ENCODE measurements at regions of chr14 and their contacts with region 1.

Region 1: GRCh38 chr14:74867673-74868072 is 8.3 kb downstream of the PROX2 start:
- DNase-seq: peak; percentile 87
- ATAC-seq: peak; percentile 97
- H3K4me3 Mint-ChIP-seq: peak overlapping the region; percentile 28
- H3K27ac Mint-ChIP-seq: peak overlapping the region; percentile 78
- H3K4me1 Mint-ChIP-seq: peaks cover 21% of the 10 kb centered on the region
- H3K27me3 Mint-ChIP-seq: no peaks in the 10 kb centered on the region
- CTCF ChIP-seq: no peak

Region 2: DNA sequence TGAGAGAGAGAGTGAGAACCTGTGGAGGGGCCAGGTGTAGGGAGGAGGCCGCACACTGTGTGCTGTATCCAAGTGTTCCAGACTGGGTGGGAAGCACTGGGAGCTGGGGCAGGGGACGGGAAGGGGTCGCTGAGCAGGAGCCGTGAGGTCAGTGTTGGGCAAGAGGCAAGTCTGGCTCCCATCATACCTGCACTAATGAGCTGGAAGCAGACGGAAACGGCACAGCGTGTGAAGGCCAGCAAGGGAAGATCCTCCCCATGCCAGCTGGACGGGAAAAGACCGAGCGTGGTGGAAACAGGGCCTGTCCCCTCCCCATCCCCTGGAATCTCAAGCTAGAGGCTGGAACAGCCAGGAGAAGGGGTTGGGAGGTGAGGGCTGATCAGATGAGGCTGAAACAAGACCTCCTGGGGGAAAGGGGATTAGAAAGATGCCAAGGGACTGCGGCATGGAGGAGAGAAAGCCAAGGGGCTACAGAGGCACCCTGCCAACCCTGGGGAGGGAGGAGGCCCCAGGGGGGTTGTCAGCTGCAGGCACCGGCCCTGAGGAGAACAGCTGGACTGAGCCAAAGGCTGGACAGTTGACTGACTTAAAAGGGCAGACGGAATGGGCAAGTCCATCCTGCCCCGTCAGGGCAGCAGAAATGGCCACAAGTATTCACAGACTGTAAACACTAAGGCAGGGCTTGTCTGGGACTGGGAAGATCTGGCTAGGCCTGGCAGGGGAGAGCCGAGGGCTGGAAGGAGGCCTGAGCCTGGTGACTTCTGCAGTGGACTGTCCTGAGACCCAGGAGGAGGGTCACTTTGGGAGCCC is 236.6 kb before region 1 on chr14:
- CTCF ChIA-PET with region 1: no interaction called
- POLR2A ChIA-PET with region 1: no interaction called
- intact Hi-C with region 1: no loop called
- DNase-seq: no peak
- ATAC-seq: no peak
- H3K4me3 Mint-ChIP-seq: no peak overlapping the region
- H3K27ac Mint-ChIP-seq: no peak overlapping the region
- H3K4me1 Mint-ChIP-seq: peaks cover 2% of the 10 kb centered on the region
- H3K27me3 Mint-ChIP-seq: no peaks in the 10 kb centered on the region
- CTCF ChIP-seq: no peak

Region 3: GRCh38 chr14:74852927-74853514 is 14.7 kb before region 1 on chr14:
- CTCF ChIA-PET with region 1: interaction called, 334 read pairs
- POLR2A ChIA-PET with region 1: no interaction called
- intact Hi-C with region 1: no loop called
- DNase-seq: no peak
- ATAC-seq: peak; percentile 28
- H3K4me3 Mint-ChIP-seq: no peak overlapping the region
- H3K27ac Mint-ChIP-seq: no peak overlapping the region
- H3K4me1 Mint-ChIP-seq: peaks cover 15% of the 10 kb centered on the region
- H3K27me3 Mint-ChIP-seq: no peaks in the 10 kb centered on the region
- CTCF ChIP-seq: no peak

Region 4: DNA sequence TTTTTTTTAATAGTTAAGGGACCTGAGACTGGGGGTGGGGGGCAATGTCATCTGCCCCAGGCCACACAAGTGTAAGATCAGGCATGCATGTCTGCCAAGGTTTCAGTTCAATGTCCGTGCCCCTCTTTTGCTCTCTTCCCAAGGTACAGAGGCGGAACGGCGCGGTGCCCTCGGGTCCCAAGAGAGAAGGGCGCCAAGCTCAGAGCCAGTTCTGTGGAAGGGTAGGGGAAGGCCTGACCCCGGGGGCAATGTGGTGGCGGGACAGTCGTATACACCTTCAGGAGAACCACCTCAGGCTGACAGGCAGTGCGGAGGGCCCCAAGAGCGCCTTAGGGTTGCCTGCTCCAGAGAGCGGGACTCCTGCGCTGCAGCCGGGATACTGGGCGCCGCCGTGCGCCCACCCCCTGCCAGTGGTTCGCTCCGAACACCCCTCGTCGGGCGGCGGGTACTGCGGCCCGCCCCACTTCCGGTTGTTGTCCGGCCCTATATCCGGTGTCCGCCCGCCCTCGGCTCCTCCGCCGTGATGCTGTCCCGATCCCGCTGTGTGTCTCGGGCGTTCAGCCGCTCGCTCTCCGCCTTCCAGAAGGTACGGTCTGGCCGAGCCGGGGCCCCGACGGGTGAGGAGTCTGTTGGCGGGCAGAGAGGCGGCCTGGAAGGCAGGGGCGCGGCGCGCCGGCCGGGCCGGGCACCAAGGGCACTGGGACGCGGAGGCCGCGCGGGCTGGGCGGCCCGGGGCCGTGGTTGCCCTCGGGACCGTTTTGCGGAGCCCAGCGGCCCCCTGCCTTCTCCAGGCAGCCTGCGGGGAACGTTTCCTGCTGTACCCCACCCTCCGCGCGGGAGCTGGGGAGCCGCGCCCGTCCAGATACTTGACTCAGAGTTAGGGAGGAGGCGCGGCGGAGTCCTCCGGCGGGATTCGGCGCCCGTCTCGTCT is 14.0 kb after region 1 on chr14 and contains the start of gene DLST:
- CTCF ChIA-PET with region 1: interaction called, 334 read pairs
- POLR2A ChIA-PET with region 1: interaction called, 24 read pairs
- intact Hi-C with region 1: no loop called
- DNase-seq: peak; percentile 88
- ATAC-seq: peak; percentile 92
- H3K4me3 Mint-ChIP-seq: peak within 1 kb of the TSS; percentile 96
- H3K27ac Mint-ChIP-seq: peak within 1 kb of the TSS; percentile 91
- H3K4me1 Mint-ChIP-seq: peaks cover 58% of the 10 kb centered on the region
- H3K27me3 Mint-ChIP-seq: no peaks in the 10 kb centered on the region
- CTCF ChIP-seq: no peak
- total RNA-seq, gene DLST: 110 to 113 TPM